AG04450 (cell line): ENCODE measurements at regions of chr11 and their contacts with region 1.

Region 1: DNA sequence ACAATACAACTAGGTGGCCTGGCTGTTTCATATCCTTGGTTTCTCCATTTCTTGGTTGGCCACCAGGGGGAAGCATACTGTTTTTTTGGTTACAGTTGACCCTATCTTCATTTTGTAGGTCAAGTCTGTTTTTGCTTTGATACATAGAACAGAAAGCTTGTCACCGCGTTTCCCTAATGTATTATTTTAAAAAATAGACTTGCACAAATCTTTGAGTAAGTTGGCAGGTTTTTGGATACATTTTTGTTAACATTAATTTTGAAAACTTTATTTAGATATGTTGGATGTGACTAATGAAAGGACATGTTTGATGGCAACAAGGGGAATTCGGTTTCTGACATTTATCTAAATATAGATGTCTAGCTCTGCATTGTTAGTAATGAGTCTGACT is 3.0 kb downstream of the NCR3LG1 start:
- DNase-seq: peak; percentile 26
- H3K4me3 ChIP-seq: no peak overlapping the region; the same call in 1 of the 2 replicates
- H3K27ac ChIP-seq: no peak overlapping the region
- H3K27me3 ChIP-seq: no peaks in the 10 kb centered on the region
- CTCF ChIP-seq: peak; percentile 73

Region 2: GRCh38 chr11:17121981-17122380 is 232.6 kb before region 1 on chr11:
- CTCF ChIA-PET with region 1: no interaction called
- POLR2A ChIA-PET with region 1: no interaction called
- DNase-seq: no peak
- H3K4me3 ChIP-seq: no peak overlapping the region
- H3K27ac ChIP-seq: no peak overlapping the region
- H3K27me3 ChIP-seq: no peaks in the 10 kb centered on the region
- CTCF ChIP-seq: no peak

Region 3: DNA sequence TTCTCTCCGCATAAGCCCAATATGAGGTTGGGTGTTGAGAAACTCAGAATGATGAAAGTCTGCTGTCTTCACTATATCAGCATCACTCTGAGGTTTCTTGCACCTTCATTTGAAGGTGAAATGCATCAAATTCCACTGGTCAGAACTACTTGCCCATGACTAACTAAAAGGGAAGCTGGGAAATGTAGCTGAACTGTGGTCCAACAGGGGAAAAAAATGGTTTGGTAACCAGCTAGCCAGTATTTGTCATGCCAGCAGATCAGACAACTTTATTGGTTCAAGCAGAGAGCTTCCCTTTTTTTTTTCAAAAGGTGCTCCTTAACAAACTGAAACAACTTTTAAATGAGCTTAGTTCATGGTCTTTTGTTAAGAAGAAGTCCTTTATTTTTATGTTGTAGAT is 132.6 kb before region 1 on chr11:
- CTCF ChIA-PET with region 1: interaction called, 16 read pairs
- POLR2A ChIA-PET with region 1: no interaction called
- DNase-seq: no peak
- H3K4me3 ChIP-seq: no peak overlapping the region
- H3K27ac ChIP-seq: no peak overlapping the region
- H3K27me3 ChIP-seq: no peaks in the 10 kb centered on the region
- CTCF ChIP-seq: no peak

Region 4: DNA sequence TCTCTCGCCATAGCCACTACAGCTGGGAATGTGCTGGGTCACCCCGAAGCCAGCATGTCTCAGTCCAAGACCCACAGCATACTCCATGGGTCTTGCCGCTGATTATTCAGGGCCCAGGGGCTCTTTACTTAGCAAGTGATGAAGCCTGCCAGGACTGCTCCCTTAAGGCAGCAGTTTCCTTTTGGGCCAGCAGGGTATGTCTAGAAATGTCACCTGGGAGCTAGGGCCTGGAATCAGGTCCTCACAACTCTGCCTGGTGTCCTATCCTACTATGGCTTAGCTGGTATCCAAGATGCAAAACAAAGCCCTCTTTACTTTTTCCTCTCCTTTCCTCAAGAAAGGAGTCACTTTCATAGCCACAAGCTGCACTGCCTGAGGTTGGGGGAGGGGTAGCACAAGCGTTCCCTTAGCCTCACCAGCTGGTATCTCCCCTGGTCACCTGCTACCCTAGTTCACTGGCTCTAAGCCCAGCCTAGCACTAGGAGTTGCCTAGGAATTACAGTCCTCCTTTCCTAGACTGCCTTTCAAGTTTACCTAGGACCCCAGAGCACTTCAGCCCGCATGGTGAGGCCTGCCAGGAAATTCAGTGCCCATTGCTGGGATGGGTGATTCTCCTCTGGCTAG is 25.6 kb before region 1 on chr11:
- CTCF ChIA-PET with region 1: interaction called, 4 read pairs
- POLR2A ChIA-PET with region 1: interaction called, 12 read pairs
- DNase-seq: no peak
- H3K4me3 ChIP-seq: no peak overlapping the region
- H3K27ac ChIP-seq: no peak overlapping the region
- H3K27me3 ChIP-seq: no peaks in the 10 kb centered on the region
- CTCF ChIP-seq: no peak

Region 5: GRCh38 chr11:17366495-17366894 is 11.9 kb after region 1 on chr11:
- CTCF ChIA-PET with region 1: interaction called, 64 read pairs
- POLR2A ChIA-PET with region 1: interaction called, 11 read pairs
- DNase-seq: no peak
- H3K4me3 ChIP-seq: no peak overlapping the region
- H3K27ac ChIP-seq: no peak overlapping the region
- H3K27me3 ChIP-seq: no peaks in the 10 kb centered on the region
- CTCF ChIP-seq: no peak

Region 6: GRCh38 chr11:17423533-17424310 is 69.1 kb after region 1 on chr11:
- CTCF ChIA-PET with region 1: no interaction called
- POLR2A ChIA-PET with region 1: no interaction called
- DNase-seq: no peak
- H3K4me3 ChIP-seq: no peak overlapping the region
- H3K27ac ChIP-seq: no peak overlapping the region
- H3K27me3 ChIP-seq: peaks cover 28% of the 10 kb centered on the region
- CTCF ChIP-seq: no peak

Region 7: GRCh38 chr11:17439316-17439782 is 84.8 kb after region 1 on chr11:
- CTCF ChIA-PET with region 1: interaction called, 21 read pairs
- POLR2A ChIA-PET with region 1: no interaction called
- DNase-seq: no peak
- H3K4me3 ChIP-seq: no peak overlapping the region
- H3K27ac ChIP-seq: no peak overlapping the region
- H3K27me3 ChIP-seq: peaks cover 18% of the 10 kb centered on the region
- CTCF ChIP-seq: no peak

Region 8: DNA sequence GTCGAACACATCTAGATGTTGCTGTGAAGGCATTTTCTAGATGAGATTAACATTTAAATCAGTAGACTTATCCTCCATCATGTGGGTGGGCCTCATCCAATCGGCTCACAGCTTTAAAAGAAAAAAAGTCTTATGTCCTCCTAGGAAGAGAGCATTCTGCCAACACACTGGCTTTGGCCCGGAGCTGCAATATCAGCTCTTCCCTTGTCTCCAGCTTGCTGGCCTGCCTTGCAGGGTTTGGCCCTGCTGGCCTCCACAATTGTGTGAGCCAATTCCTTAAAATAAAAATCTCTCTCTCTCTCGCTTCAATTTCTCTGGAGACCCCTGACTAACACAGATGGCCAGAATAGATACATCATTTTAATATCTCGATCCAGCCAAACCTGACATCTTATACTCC is 135.2 kb after region 1 on chr11:
- CTCF ChIA-PET with region 1: no interaction called
- POLR2A ChIA-PET with region 1: no interaction called
- DNase-seq: no peak
- H3K4me3 ChIP-seq: no peak overlapping the region
- H3K27ac ChIP-seq: no peak overlapping the region
- H3K27me3 ChIP-seq: no peaks in the 10 kb centered on the region
- CTCF ChIP-seq: no peak

Region 9: GRCh38 chr11:17719938-17720795 is 365.6 kb after region 1 on chr11:
- CTCF ChIA-PET with region 1: no interaction called
- POLR2A ChIA-PET with region 1: no interaction called
- DNase-seq: no peak
- H3K4me3 ChIP-seq: no peak overlapping the region
- H3K27ac ChIP-seq: no peak overlapping the region
- H3K27me3 ChIP-seq: peaks cover 56% of the 10 kb centered on the region
- CTCF ChIP-seq: no peak

Region 10: GRCh38 chr11:18347471-18348125 is 993.0 kb after region 1 on chr11:
- CTCF ChIA-PET with region 1: no interaction called
- POLR2A ChIA-PET with region 1: interaction called, 10 read pairs
- DNase-seq: peak; percentile 59
- H3K4me3 ChIP-seq: no peak overlapping the region
- H3K27ac ChIP-seq: peak overlapping the region; percentile 49
- H3K27me3 ChIP-seq: no peaks in the 10 kb centered on the region
- CTCF ChIP-seq: no peak